Brain microvascular endothelial cell (primary cell): ENCODE measurements at regions of chr4 and their contacts with region 1.

Region 1: DNA sequence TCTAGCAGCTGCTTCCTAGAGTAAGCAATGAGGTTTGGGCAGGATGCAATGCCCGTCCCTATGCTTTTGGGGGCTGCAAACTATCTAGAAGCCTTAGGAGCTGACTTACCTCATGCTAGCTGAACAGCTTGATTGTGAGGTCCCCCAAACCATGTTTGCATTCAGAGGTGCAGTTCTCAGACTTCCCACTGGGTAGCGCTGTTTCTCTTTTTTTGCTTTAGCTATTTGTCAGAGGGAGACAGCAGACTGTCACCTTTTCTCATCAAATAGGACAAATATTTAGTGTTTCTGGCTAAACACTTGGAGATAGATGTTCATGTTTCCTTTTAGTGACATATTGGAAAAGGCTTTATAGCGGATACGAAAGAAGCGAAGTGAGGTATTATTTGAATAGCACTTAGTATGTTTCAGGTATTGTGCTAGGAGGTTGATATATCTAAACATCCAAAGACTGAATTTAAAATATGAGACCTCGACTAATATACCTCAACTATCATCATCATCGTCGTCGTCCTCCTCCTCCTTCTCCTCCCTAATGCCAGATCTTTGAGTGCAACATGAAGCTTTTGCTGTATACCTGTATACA is 18.7 kb upstream of the TMEM192 start:
- DNase-seq: peak; percentile 54
- H3K4me3 ChIP-seq: no peak overlapping the region
- H3K27ac ChIP-seq: no peak overlapping the region
- H3K27me3 ChIP-seq: no peaks in the 10 kb centered on the region
- CTCF ChIP-seq: peak; percentile 89

Region 2: DNA sequence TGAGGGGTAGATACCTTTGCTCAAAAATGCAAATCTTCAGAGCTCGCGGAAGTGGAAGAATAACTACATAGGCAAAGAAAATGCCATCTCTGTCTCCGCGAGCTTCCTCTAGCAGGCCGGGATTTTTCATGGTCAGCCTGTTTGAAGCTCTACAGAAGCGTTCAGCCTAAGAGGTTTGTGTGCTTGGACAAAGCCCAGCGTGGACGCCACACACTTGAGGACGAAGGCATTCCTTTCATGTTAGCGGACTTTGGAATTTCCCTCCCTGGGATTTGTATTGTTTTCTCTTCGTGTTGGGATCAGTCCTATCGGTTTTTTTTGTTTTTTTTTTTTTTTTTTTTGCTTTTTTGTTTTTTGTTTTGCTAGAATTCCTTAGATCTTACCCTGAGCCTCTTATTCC is 323.7 kb before region 1 on chr4:
- in situ Hi-C with region 1: no loop called
- DNase-seq: peak; percentile 16
- H3K4me3 ChIP-seq: no peak overlapping the region
- H3K27ac ChIP-seq: no peak overlapping the region
- H3K27me3 ChIP-seq: no peaks in the 10 kb centered on the region
- CTCF ChIP-seq: no peak

Region 3: GRCh38 chr4:165464813-165465381 is 333.6 kb after region 1 on chr4:
- in situ Hi-C with region 1: loop called (anchors 25 kb)
- DNase-seq: peak; percentile 25
- H3K4me3 ChIP-seq: no peak overlapping the region
- H3K27ac ChIP-seq: no peak overlapping the region
- H3K27me3 ChIP-seq: no peaks in the 10 kb centered on the region
- CTCF ChIP-seq: peak; percentile 74